ENCODE measurements at regions of chr7 and their contacts with region 1.

Region 1: DNA sequence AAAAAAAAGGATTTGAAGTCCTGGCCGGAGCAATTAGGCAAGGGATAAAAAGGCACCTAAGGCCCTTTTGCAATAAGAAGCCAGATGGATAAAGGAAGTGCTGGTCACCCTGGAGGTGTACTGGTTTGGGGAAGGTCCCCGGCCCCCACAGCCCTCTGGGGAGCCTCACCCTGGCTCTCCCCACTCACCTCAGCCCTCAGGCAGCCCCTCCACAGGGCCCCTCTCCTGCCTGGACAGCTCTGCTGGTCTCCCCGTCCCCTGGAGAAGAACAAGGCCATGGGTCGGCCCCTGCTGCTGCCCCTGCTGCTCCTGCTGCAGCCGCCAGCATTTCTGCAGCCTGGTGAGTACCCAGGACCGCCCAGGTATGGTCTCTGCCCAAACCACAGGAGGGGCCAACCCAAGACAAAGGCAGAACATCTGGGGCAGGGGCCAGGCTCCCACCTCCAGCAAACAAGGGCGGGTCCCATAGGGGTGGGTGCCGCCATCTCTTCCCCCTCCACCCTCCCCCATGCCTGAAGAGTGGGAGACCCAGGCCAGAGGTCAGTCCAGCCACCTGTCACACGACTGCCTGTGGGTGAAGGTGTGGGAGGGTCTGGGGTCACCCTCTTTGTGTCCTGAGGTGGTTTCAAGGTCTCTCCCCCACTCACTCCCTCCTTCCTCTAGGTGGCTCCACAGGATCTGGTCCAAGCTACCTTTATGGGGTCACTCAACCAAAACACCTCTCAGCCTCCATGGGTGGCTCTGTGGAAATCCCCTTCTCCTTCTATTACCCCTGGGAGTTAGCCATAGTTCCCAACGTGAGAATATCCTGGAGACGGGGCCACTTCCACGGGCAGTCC is at the start of gene PILRB:
- DNase-seq: peak; percentile 69
- ATAC-seq: peak; percentile 88
- H3K4me3 ChIP-seq: no peak within 1 kb of the TSS
- H3K4me3 Mint-ChIP-seq: no peak within 1 kb of the TSS
- H3K27ac ChIP-seq: peak within 1 kb of the TSS; percentile 49 to 75
- H3K27ac Mint-ChIP-seq: peak within 1 kb of the TSS; percentile 90
- H3K4me1 ChIP-seq: peaks cover 10 to 24% of the 10 kb centered on the region in 2 donors
- H3K4me1 Mint-ChIP-seq: peaks cover 22% of the 10 kb centered on the region
- H3K27me3 ChIP-seq: no peaks in the 10 kb centered on the region
- H3K27me3 Mint-ChIP-seq: no peaks in the 10 kb centered on the region
- CTCF ChIP-seq: peak; percentile 48
- total RNA-seq, gene PILRB: 162 and 174 TPM in 2 replicates

Region 2: DNA sequence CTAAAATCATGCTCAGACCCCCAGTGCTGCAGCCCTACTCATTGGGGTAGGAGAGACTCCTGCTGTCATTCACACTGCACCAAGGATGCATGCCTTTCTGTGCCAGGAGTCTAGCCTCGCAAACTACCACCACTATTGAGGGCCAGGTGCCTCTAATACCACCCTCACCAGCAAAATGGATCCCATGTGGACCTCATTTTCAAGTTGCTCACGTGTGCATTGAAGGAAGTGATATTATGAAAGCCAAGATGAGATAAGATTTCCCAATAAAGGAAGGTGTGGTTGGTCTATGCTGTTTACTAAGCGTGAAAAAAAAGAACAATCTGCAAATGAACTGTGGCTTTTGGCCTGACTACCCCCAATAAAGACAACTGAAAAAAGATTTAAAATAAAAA is 216.7 kb before region 1 on chr7:
- CTCF ChIA-PET with region 1: no interaction called
- POLR2A ChIA-PET with region 1: no interaction called
- intact Hi-C with region 1: no loop called
- DNase-seq: no peak
- ATAC-seq: no peak
- H3K4me3 ChIP-seq: no peak overlapping the region
- H3K4me3 Mint-ChIP-seq: no peak overlapping the region
- H3K27ac ChIP-seq: no peak overlapping the region
- H3K27ac Mint-ChIP-seq: no peak overlapping the region
- H3K4me1 ChIP-seq: peaks cover 10 to 25% of the 10 kb centered on the region in 2 donors
- H3K4me1 Mint-ChIP-seq: peaks cover 18% of the 10 kb centered on the region
- H3K27me3 ChIP-seq: no peaks in the 10 kb centered on the region
- H3K27me3 Mint-ChIP-seq: no peaks in the 10 kb centered on the region
- CTCF ChIP-seq: no peak

Region 3: GRCh38 chr7:100396421-100396982 is 38.3 kb after region 1 on chr7:
- CTCF ChIA-PET with region 1: interaction called, 10 read pairs
- POLR2A ChIA-PET with region 1: interaction called, 3 read pairs
- intact Hi-C with region 1: no loop called
- DNase-seq: peak; percentile 86
- ATAC-seq: peak; percentile 90
- H3K4me3 ChIP-seq: peak overlapping the region in 3 of 5 experiments; percentile 1 to 37 (median 8)
- H3K4me3 Mint-ChIP-seq: peak overlapping the region; percentile 74
- H3K27ac ChIP-seq: peak overlapping the region; percentile 67 to 82
- H3K27ac Mint-ChIP-seq: peak overlapping the region; percentile 93
- H3K4me1 ChIP-seq: peaks cover 30 to 41% of the 10 kb centered on the region in 2 donors
- H3K4me1 Mint-ChIP-seq: peaks cover 49% of the 10 kb centered on the region
- H3K27me3 ChIP-seq: no peaks in the 10 kb centered on the region
- H3K27me3 Mint-ChIP-seq: no peaks in the 10 kb centered on the region
- CTCF ChIP-seq: no peak

Measured in B cell (primary cell).